GM23248 (cell line): ENCODE measurements at regions of chr6 and their contacts with region 1.

Region 1: GRCh38 chr6:105484238-105485161 is 81.6 kb upstream of the PREP start:
- DNase-seq: peak; percentile 60
- H3K4me3 ChIP-seq: no peak overlapping the region
- H3K27ac ChIP-seq: no peak overlapping the region
- H3K4me1 ChIP-seq: peaks cover 29% of the 10 kb centered on the region
- H3K27me3 ChIP-seq: no peaks in the 10 kb centered on the region

Region 2: GRCh38 chr6:104859225-104860146 is 625.0 kb before region 1 on chr6 and contains the start of gene HACE1:
- in situ Hi-C with region 1: no loop called
- DNase-seq: peak; percentile 97
- H3K4me3 ChIP-seq: peak within 1 kb of the TSS; percentile 80
- H3K27ac ChIP-seq: peak within 1 kb of the TSS; percentile 47
- H3K4me1 ChIP-seq: peaks cover 12% of the 10 kb centered on the region; the same call in 1 of the 2 replicates
- H3K27me3 ChIP-seq: no peaks in the 10 kb centered on the region
- total RNA-seq, gene HACE1: 13.3 and 38.2 TPM in 2 replicates

Region 3: DNA sequence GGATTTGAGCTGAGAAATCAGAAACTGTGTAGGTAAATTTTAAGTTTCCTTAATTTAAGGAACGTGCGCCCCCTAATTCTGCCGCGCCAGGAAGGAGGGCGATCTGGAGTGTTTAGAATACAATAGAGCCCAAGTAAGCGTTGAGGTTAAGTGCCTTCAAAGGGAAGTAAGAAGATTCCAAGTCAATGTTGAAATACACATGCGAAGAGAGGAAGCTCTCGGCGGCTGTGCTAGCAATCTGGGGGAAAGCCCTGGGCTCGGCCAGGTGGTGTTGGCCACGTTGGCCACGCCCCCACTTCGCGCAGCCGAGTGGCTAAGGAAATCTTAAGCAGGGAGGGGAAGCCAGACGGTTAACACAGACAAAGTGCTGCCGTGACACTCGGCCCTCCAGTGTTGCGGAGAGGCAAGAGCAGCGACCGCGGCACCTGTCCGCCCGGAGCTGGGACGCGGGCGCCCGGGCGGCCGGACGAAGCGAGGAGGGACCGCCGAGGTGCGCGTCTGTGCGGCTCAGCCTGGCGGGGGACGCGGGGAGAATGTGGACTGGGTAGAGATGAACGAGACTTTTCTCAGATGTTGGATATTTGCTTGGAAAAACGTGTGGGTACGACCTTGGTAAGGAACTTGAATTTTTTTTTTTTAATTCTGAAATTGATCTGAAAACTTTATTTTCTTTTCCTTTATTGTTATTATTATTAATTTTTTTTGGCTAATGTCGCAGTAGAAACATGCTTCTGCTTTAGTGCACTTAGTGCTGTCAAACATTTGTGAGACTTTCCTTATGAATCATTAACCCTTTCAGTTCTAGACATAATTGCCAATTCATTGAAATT is 601.7 kb after region 1 on chr6 and contains the start of gene PRDM1:
- in situ Hi-C with region 1: loop called (anchors 25 kb)
- DNase-seq: peak; percentile 81
- H3K4me3 ChIP-seq: peak within 1 kb of the TSS; percentile 93
- H3K27ac ChIP-seq: peak within 1 kb of the TSS; percentile 75
- H3K4me1 ChIP-seq: peaks cover 66% of the 10 kb centered on the region
- H3K27me3 ChIP-seq: no peaks in the 10 kb centered on the region
- total RNA-seq, gene PRDM1: 2.7 and 3.8 TPM in 2 replicates

Region 4: DNA sequence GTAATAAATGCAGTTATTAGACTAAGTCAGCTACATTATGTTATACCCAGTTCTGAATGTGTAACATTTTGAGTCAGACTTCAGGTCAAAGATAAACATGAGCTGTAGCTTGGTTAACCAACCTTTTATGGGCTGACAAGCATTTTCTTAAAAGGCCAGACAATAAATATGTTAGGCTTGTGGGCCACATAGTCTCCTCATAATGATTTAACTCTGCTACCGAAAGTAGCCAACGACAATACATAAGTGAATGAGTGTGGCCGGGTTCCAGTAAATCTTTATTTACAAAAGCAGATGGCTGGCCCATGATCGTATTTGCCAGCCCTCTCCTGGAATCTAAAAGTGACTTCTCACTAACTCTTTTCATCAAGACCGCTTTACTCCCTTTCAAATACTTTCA is 791.2 kb after region 1 on chr6:
- in situ Hi-C with region 1: loop called (anchors 25 kb)
- DNase-seq: peak; percentile 47
- H3K4me3 ChIP-seq: no peak overlapping the region
- H3K27ac ChIP-seq: no peak overlapping the region; the same call in 1 of the 2 replicates
- H3K4me1 ChIP-seq: peaks cover 21% of the 10 kb centered on the region
- H3K27me3 ChIP-seq: no peaks in the 10 kb centered on the region